OCI-LY7 (cell line): ENCODE measurements at regions of chr7 and their contacts with region 1.

Region 1: DNA sequence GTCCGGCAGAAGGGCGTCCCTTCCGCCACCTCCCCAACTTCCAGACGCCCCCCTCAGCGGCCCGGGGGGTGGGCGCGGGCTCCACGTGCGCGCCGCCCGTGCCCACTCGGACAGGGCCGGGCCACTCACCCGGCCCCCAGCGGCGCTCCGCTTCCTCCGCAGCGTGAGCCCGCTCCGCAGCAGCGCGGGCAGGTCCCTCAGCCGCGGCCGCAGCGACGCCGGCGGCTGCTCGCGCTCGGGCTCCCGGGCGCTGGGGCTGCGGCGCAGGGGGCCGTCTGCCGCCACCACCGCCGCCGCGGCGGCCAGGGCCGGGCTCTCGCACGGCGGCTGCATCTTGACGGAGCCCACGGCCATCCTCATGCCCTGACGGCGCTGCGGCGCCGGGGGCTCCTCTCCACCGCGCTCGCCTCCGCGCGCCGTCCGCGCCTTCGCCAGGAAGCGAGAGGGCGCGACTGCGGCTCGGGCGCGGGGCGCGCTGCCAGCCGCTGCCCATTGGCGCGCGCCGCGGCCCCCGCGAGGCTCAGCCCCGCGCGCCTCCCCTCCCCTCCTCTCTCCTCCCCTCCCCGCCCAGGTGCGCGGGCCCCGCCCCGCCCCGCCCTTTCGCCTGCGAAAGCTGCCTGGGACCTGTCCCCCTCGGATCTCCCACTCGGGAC is at the start of gene RAPGEF5:
- DNase-seq: peak; percentile 83
- H3K4me3 ChIP-seq: peak within 1 kb of the TSS; percentile 82
- H3K27ac ChIP-seq: peak within 1 kb of the TSS; percentile 72
- H3K4me1 ChIP-seq: peaks cover 53% of the 10 kb centered on the region
- CTCF ChIP-seq: no peak
- total RNA-seq, gene RAPGEF5: 114 and 136 TPM in 2 replicates

Region 2: DNA sequence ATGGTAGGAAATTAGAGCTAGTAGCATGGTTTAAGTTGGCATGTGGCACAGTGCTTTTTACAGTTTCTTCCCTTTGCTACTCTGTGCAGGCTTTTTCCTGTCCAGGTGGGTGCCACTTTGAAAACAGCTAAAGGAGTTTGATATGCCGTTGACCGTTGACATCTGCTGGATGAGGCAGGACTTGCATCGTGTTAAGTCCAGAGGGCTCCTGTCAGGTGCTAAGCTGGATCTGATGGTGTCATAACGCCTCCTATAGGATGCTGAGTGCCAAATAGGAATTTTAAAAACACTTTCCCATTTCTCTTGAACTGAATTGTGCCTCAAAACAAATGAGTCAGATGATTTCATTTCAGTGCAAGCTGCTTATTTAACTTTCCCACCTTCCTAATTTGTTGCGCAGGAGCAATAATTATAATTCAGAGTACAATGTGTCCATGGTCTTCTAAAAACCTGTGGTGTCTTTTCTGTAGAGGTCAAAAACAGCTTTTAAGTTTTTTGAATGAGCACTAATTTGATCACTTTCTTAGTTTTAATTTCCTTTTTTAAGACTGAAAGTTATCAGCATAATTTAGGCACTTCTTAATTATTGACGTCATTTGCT is 589.4 kb before region 1 on chr7:
- CTCF ChIA-PET with region 1: no interaction called
- POLR2A ChIA-PET with region 1: no interaction called
- intact Hi-C with region 1: no loop called
- DNase-seq: peak; percentile 73
- H3K4me3 ChIP-seq: no peak overlapping the region
- H3K27ac ChIP-seq: no peak overlapping the region
- H3K4me1 ChIP-seq: no peaks in the 10 kb centered on the region
- CTCF ChIP-seq: peak; percentile 80

Region 3: DNA sequence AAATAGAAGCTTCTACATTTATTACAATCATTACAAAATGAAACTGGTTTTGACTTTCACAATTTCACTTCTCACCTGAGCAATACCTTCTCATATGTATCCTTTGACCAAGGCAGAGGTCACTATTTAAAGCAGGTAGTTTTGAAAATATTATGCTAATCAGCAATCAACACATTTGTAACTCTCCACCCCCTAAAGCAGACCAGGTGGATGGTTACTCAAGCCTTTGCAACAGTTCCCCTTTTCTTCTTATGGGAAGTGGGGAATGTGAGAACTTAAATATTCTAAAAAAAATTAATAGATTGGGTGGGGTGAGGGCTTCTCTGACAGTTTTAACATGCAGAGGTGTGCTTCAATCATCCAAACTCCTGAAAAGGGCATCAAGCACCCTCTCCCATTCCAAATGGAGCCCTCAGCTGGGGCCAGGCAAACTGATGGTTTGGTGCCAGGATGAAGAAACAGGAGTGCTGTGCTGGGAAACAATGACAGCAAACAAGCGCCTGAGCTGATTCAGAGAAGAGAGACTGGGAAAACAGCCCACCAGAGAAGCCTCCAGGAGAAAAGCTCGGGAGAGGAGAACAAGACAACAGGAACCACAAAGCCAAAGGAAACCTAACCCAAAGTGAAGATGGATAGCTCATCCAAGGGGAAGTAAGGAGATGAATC is 17.0 kb before region 1 on chr7:
- CTCF ChIA-PET with region 1: no interaction called
- POLR2A ChIA-PET with region 1: interaction called, 12 read pairs
- intact Hi-C with region 1: no loop called
- DNase-seq: peak; percentile 42
- H3K4me3 ChIP-seq: peak overlapping the region; percentile 17
- H3K27ac ChIP-seq: peak overlapping the region; percentile 52
- H3K4me1 ChIP-seq: peaks cover 55% of the 10 kb centered on the region
- CTCF ChIP-seq: no peak

Region 4: DNA sequence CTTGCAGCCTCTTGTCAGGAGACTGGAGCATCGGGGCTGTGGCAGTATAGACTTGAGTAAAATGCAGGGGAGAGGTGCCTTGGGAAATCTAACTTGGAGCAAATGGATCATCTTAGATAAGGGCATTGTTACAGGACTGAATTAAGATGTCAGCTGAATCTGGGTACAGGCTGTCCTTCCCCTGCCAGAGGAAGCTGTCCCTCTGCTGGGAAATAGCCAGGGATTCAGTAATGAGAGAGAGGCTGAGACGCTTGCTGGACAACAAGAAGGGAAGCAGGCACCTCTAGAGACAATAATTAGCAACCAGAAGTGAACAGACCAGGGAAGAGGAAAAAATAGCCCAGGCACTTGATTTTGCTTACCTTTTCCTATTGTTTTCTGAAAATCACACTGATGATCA is 20.9 kb after region 1 on chr7:
- CTCF ChIA-PET with region 1: no interaction called
- POLR2A ChIA-PET with region 1: interaction called, 47 read pairs
- intact Hi-C with region 1: no loop called
- DNase-seq: no peak
- H3K4me3 ChIP-seq: peak overlapping the region; percentile 24
- H3K27ac ChIP-seq: no peak overlapping the region
- H3K4me1 ChIP-seq: peaks cover 52% of the 10 kb centered on the region
- CTCF ChIP-seq: no peak

Region 5: DNA sequence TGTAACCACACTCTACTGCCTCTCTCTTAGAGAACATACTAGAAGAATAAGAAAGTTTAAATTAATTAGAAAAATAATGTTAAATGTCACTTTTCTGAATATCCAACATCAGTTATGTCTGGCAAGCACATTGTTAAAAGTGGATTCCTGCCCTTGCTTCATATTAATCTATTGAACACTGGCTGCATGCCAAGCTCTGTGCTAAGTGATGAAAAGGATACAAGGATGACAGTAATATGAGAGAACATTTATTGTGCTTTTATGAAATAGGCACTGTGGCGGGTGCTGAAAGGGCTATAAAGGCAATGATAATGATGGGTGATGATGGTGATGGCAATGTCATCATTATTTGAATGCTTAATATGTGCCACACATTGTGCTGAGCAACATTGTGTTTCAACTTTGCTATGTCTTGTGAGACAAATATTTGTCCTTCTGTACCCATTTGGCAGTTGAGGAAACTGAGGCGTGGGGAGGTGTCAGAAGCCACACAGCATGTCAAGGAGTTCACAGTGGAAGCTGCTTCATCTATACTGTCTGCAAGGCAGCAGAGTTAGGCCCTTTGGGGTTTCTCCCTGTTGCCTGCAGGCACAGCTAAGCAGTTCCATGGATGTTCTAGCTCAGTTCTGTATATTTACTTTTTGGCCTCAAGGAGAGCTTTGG is 64.3 kb after region 1 on chr7:
- CTCF ChIA-PET with region 1: no interaction called
- POLR2A ChIA-PET with region 1: interaction called, 23 read pairs
- intact Hi-C with region 1: no loop called
- DNase-seq: no peak
- H3K4me3 ChIP-seq: no peak overlapping the region
- H3K27ac ChIP-seq: peak overlapping the region; percentile 87
- H3K4me1 ChIP-seq: peaks cover 68% of the 10 kb centered on the region
- CTCF ChIP-seq: no peak

Region 6: DNA sequence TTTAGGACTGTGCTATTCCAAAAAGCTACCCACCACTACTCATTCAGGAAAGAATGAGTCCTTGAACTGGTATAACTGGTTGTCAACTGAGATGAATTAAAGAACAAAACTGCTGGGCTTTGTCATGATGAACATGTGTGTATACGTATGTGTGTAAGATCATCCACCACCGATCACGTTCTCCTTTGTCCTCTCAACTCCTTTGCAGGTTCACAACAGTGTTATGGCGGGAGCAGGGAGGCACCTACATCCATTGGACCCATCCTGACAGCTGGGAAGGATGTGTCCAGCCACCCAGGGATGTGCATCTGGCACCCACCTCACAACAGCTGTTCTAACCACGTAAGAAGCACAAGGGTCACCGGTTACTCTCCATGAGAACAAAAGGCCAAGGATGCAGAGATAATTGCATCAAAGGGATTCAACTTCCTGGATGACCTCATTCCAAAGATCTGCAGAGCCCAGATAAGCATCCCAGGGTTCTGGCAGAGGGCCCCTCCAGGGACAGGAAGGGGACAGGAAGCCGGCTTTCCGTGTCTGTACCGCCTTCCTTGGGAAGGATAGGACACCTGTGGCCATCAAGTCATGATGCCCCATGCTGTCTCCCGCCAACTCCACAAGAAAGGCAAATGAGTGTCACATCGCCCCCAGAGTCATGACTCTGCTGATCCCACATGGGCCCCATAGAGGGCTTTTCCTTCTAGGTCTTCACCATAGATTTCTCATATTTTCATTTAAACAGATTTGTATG is 77.1 kb after region 1 on chr7:
- CTCF ChIA-PET with region 1: interaction called, 4 read pairs
- POLR2A ChIA-PET with region 1: interaction called, 26 read pairs
- intact Hi-C with region 1: loop called (anchors 1 kb)
- DNase-seq: peak; percentile 60
- H3K4me3 ChIP-seq: no peak overlapping the region
- H3K27ac ChIP-seq: peak overlapping the region; percentile 99
- H3K4me1 ChIP-seq: peaks cover 97% of the 10 kb centered on the region
- CTCF ChIP-seq: peak; percentile 70

Region 7: DNA sequence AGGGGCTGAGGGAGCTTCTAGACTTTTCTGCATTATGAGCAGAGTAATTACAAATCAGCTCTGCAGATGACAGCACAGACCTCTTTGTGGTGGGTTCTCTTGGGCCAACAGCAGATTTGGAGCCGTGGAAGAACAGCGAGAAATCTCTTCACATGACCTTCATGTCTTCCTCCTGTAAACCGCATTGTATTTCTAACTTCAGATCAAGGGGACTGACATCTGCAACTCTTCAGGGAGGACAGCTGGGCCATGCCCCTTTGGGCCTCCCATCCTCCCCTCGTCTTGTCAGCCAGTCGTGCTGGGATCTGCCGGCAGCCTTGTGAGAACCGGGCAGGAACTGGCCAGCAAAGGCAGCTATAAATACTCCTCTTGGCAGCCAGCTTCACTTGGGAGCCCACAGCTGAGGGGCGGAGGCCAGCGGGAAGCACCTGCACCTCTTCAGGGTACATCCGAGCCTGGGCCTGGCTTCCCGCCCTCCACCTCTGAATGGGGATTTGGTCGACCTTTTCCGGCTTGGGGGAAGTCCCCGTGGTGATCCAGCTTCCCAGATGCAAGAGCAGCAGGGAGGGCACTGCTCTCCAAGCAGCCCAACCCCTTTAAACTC is 88.4 kb after region 1 on chr7:
- CTCF ChIA-PET with region 1: interaction called, 15 read pairs
- POLR2A ChIA-PET with region 1: interaction called, 30 read pairs
- intact Hi-C with region 1: loop called (anchors 1 kb)
- DNase-seq: peak; percentile 93
- H3K4me3 ChIP-seq: peak overlapping the region; percentile 51
- H3K27ac ChIP-seq: peak overlapping the region; percentile 98
- H3K4me1 ChIP-seq: peaks cover 87% of the 10 kb centered on the region
- CTCF ChIP-seq: no peak